ENCODE measurements at regions of chr1 and their contacts with region 1.

Region 1: DNA sequence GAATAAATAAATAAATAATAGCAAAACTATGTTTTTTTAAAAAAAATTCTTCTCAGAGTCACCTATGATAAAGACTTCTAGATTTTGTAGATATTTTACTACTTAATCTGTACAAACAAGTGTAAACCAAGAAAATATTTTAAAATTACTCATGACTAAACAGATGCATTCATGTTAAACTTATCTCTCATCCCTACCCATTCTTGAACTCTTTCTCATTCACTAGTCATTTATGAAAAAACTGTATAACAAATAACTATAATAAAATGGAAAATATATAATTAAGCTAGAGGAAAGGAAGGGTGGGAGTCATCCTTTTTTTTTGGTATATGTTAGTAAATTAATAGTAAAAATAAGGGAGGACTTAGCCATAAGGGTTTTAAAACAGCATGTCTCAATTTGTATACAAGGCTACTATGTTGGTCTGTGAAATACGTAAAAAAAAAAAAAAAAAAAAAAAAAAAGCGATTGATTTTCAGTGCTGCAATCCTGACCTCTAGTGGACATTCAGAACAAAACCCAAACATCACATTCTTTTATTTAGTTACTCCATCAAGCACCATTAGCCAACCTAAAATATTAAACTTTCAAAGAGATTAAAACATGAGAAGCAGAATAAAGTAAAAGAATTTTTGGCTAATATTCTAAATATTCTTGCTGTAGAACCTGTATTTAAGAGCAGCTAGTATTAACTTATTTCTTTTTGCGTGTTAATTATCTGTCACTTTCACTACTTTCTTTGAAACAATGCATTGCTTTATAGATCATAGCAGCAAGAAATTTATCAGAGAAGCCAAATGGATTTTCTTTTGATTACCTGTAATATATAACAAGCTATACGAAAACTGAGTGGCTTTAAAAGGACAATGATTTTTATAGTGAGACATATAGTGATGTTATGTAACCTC is 255.8 kb upstream of the CACYBP start:
- DNase-seq: peak; percentile 7
- H3K4me3 ChIP-seq: no peak overlapping the region
- H3K27ac ChIP-seq: no peak overlapping the region
- H3K4me1 ChIP-seq: no peaks in the 10 kb centered on the region
- H3K27me3 ChIP-seq: no peaks in the 10 kb centered on the region
- CTCF ChIP-seq: peak in 2 of 3 experiments; percentile 37 to 42

Region 2: DNA sequence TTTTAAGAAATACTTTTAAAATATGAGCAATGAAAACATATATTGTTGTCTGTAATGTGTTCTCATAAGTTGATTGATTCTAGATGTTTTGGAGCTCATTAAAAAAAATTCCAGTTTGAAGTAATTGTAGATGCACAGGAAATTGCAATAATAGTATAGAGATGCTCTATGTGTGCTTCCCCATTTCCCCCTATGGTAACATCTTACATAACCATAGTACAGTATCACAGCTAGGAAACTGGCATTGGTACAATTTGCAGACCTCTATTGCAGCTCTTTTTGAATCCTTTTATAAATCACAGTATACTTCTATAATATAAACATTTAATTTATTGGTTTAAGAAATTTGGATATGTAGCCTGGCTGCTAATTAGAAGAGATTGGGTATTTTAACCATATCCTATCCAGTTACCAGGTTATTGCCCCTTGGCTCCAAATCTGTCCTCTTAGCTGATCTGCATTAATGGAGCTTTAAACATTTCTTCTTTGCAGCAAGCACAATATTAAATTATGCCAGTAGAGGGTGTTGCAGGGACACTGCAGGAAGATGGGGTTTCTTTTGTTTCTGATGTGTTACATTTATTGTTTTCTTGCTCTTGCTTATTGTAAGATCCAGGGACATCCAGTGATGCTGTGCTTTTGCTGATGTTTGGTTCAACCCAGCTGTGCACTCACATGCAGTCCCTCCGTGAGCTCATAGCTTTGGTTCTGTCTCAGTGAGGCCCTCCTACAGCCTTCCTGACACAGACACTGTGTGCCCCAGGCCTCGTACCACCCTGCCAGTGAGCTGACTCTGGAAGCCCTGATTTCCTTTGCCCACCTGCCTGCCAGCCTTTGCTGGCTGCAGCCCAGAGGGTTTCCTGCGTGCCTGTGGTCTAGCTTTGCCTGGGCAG is 481.3 kb before region 1 on chr1:
- dilution Hi-C with region 1: loop called (anchors 25 kb)
- DNase-seq: peak; percentile 2
- H3K4me3 ChIP-seq: no peak overlapping the region
- H3K27ac ChIP-seq: no peak overlapping the region
- H3K4me1 ChIP-seq: no peaks in the 10 kb centered on the region
- H3K27me3 ChIP-seq: no peaks in the 10 kb centered on the region
- CTCF ChIP-seq: peak; percentile 24 to 84 (median 66)

Region 3: DNA sequence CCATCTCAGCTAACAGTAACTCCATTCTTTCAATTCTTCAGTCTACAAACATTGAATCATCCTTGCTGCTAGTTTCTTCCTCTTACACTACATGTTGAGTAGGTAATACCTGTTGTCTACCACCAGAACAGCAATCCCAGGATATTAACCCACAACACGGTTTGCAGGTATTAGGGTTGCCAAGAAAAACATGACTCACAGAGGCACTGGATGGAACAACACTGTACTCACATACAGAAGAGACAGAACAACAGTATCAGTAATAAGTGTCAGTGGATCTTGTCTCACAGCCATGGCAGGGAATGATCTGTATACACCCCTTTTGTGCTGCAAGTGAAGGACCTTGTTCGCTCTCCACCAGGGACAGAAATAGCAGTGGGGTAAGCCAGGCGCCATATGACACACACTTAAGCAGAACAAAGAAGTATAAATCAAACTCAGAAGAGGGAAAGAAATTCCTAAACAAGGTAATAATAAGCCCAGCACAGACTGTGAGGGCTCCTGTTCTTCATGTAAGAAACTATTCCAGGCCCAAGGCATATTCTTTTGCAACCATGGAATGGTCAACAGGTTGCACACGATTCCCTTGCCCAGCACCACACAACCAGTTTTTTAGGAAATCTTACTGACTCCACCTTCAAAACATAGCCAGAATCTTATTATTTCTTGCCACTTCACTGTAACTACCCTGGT is 83.9 kb before region 1 on chr1:
- dilution Hi-C with region 1: no loop called
- DNase-seq: peak; percentile 33
- H3K4me3 ChIP-seq: no peak overlapping the region
- H3K27ac ChIP-seq: no peak overlapping the region
- H3K4me1 ChIP-seq: peaks cover 12% of the 10 kb centered on the region
- H3K27me3 ChIP-seq: no peaks in the 10 kb centered on the region
- CTCF ChIP-seq: peak in 1 of 3 experiments; percentile 15

Region 4: DNA sequence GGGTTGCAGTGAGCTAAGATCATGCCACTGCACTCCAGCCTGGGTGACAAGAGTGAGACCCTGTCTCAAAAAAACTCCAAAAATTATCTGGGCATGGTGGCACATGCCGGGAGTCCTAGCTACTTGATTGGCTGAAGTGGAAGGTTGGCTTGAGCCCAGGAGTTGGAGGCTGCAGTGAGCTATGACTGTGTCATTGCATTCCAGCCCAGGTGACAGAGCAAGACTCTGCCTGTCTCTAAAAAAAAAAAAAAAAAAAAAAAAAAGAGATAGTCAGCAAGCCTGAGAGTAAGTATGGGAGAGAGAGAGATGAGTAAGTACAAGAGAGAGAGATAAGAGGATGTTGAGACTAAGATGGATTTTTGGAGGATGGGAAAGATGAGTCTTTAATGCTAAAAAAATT is 75.0 kb after region 1 on chr1:
- dilution Hi-C with region 1: no loop called
- DNase-seq: peak; percentile 92
- H3K4me3 ChIP-seq: no peak overlapping the region
- H3K27ac ChIP-seq: peak overlapping the region; percentile 52
- H3K4me1 ChIP-seq: peaks cover 48% of the 10 kb centered on the region
- H3K27me3 ChIP-seq: no peaks in the 10 kb centered on the region
- CTCF ChIP-seq: no peak